ENCODE measurements at regions of chr12 and their contacts with region 1.

Region 1: GRCh38 chr12:38324896-38325295 is 8.3 kb downstream of the ALG10B start:
- DNase-seq: no peak
- H3K4me3 ChIP-seq: no peak overlapping the region
- H3K27ac ChIP-seq: no peak overlapping the region
- H3K4me1 ChIP-seq: peaks cover 0 to 6% (median 0%) of the 10 kb centered on the region in 4 donors
- H3K27me3 ChIP-seq: no peaks in the 10 kb centered on the region
- CTCF ChIP-seq: no peak
- EP300 ChIP-seq: no peak
- POLR2A ChIP-seq: no peak

Region 2: DNA sequence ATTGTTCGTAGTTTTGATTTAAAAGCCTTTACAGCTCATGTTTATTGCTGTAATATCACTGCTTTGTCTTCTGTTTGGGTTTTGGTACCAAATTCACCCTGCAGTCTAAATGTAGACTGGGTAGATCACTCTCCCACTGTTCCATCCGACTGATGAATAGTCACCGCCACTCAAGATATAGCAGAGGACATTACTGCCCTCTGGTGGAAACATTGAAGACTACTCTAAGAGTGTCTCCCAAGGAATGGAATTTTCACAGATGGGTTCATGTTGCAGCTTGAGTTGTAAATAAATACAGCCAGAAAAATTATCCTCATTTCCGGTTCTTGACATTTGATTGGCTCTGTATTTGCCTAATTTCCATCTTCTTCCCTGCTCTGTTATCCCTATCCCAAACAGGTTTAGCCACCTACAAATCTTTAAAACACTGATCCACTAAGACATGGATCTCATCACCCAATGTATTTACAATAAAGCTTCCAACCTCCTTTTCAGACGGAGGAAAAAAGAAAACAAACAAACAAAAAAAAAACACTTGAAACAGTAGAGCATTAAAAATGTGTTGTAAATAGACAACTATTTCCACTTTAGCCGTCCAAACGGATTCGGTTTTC is 778.8 kb after region 1 on chr12:
- intact Hi-C with region 1: loop called (anchors 10 kb)
- DNase-seq: peak in 1 of 2 donors; percentile 79
- H3K4me3 ChIP-seq: no peak overlapping the region
- H3K27ac ChIP-seq: no peak overlapping the region
- H3K4me1 ChIP-seq: no peaks in the 10 kb centered on the region
- H3K27me3 ChIP-seq: no peaks in the 10 kb centered on the region
- CTCF ChIP-seq: peak in 5 of 7 experiments; percentile 50 to 65 (median 64)
- EP300 ChIP-seq: no peak
- POLR2A ChIP-seq: no peak